Activated naive CD4-positive, alpha-beta T cell treated with anti-CD3 and anti-CD28 coated beads for 36 hours (primary cell): ENCODE measurements at regions of chr12 and their contacts with region 1.

Region 1: GRCh38 chr12:5745265-5745888 is 199.7 kb downstream of the ANO2 start:
- DNase-seq: peak; percentile 84
- H3K4me3 Mint-ChIP-seq: no peak overlapping the region
- H3K27ac Mint-ChIP-seq: no peak overlapping the region
- H3K4me1 Mint-ChIP-seq: peaks cover 22% of the 10 kb centered on the region
- H3K27me3 Mint-ChIP-seq: peaks cover 3% of the 10 kb centered on the region

Region 2: GRCh38 chr12:5428332-5429221 is 316.8 kb before region 1 on chr12:
- CTCF ChIA-PET with region 1: no interaction called
- intact Hi-C with region 1: loop called (anchors 5 kb)
- DNase-seq: no peak
- H3K4me3 Mint-ChIP-seq: no peak overlapping the region
- H3K27ac Mint-ChIP-seq: no peak overlapping the region
- H3K4me1 Mint-ChIP-seq: peaks cover 18% of the 10 kb centered on the region
- H3K27me3 Mint-ChIP-seq: peaks cover 53% of the 10 kb centered on the region

Region 3: DNA sequence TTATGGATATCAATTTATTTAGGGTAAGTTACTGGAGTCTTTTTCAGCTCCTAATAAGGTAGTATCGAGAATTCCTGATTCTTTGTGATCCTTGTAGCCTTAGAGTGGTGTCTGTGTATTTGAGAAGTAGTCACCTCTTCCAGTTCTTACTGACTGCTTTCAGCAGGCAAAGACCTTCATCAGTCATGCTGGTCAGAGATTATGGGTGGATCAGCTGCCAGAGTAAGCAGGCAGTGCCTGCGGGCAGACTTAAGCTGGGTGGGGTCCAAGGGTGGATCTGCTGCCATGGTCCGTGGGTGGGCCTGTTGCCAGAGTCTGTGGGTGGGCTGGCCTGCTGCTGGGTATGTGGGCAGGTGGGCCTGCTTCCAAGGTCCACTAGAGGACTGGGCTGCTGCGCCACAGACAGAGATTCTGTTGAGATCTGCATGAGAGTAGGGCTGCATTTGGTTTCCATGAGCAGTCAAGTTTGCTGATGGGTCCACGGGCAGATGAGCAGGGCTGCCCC is 11.0 kb after region 1 on chr12:
- CTCF ChIA-PET with region 1: interaction called, 12 read pairs
- intact Hi-C with region 1: no loop called
- DNase-seq: no peak
- H3K4me3 Mint-ChIP-seq: no peak overlapping the region
- H3K27ac Mint-ChIP-seq: no peak overlapping the region
- H3K4me1 Mint-ChIP-seq: no peaks in the 10 kb centered on the region
- H3K27me3 Mint-ChIP-seq: peaks cover 27% of the 10 kb centered on the region

Region 4: DNA sequence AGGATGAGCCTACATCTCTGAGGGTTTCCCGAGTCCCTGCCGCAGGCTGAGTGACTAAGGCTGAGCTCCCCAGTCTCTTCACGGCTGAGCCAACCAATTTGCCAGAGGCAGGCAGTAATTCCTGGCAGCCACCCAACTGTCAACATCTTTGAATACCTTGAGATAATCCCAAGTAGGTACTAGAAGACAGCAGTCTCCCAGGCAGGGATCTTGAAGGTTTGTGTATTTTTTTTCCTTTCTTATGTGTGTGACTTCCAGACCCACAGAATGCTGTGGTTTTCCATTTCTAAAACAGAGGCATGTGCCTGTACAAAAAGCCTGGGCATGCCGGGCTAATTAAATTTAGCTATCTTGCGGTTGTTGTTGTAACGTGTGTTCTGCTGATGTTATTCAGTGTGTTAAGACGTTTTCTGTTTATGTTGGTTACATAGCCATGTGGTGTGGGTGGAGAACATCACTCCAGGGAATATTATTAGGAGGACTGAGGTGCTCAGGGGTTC is 44.1 kb after region 1 on chr12:
- CTCF ChIA-PET with region 1: interaction called, 24 read pairs
- intact Hi-C with region 1: no loop called
- DNase-seq: no peak
- H3K4me3 Mint-ChIP-seq: no peak overlapping the region
- H3K27ac Mint-ChIP-seq: no peak overlapping the region
- H3K4me1 Mint-ChIP-seq: no peaks in the 10 kb centered on the region
- H3K27me3 Mint-ChIP-seq: no peaks in the 10 kb centered on the region

Region 5: GRCh38 chr12:5796171-5796958 is 51.0 kb after region 1 on chr12:
- CTCF ChIA-PET with region 1: interaction called, 24 read pairs
- intact Hi-C with region 1: loop called (anchors 5 kb)
- DNase-seq: peak; percentile 42
- H3K4me3 Mint-ChIP-seq: no peak overlapping the region
- H3K27ac Mint-ChIP-seq: no peak overlapping the region
- H3K4me1 Mint-ChIP-seq: no peaks in the 10 kb centered on the region
- H3K27me3 Mint-ChIP-seq: no peaks in the 10 kb centered on the region

Region 6: DNA sequence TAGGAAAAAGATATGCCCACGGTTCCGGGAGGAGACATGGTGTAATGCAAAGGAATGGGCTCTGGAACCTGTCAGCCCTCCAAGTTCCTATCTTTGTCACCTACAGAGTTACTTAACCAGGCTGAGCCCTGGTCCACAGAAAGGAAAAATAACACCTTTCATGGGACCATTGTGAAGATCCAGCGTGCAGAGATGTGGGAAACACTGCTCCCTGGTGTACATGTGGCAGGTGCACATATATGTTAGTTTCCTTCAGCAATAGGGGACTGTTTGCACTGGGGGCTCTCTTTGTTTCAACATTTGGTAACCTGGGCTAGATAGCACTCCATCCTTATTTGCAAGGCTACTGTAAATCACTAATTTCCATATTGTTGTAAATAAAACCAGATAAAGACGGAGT is 127.4 kb after region 1 on chr12:
- CTCF ChIA-PET with region 1: no interaction called
- intact Hi-C with region 1: loop called (anchors 10 kb)
- DNase-seq: peak; percentile 12
- H3K4me3 Mint-ChIP-seq: no peak overlapping the region
- H3K27ac Mint-ChIP-seq: no peak overlapping the region
- H3K4me1 Mint-ChIP-seq: no peaks in the 10 kb centered on the region
- H3K27me3 Mint-ChIP-seq: peaks cover 3% of the 10 kb centered on the region

Region 7: GRCh38 chr12:6602526-6602925 is 857.1 kb after region 1 on chr12:
- CTCF ChIA-PET with region 1: no interaction called
- intact Hi-C with region 1: no loop called
- DNase-seq: no peak
- H3K4me3 Mint-ChIP-seq: no peak overlapping the region
- H3K27ac Mint-ChIP-seq: peak overlapping the region; percentile 48
- H3K4me1 Mint-ChIP-seq: peaks cover 42% of the 10 kb centered on the region
- H3K27me3 Mint-ChIP-seq: no peaks in the 10 kb centered on the region